ENCODE measurements at regions of chr17 and their contacts with region 1.

Region 1: DNA sequence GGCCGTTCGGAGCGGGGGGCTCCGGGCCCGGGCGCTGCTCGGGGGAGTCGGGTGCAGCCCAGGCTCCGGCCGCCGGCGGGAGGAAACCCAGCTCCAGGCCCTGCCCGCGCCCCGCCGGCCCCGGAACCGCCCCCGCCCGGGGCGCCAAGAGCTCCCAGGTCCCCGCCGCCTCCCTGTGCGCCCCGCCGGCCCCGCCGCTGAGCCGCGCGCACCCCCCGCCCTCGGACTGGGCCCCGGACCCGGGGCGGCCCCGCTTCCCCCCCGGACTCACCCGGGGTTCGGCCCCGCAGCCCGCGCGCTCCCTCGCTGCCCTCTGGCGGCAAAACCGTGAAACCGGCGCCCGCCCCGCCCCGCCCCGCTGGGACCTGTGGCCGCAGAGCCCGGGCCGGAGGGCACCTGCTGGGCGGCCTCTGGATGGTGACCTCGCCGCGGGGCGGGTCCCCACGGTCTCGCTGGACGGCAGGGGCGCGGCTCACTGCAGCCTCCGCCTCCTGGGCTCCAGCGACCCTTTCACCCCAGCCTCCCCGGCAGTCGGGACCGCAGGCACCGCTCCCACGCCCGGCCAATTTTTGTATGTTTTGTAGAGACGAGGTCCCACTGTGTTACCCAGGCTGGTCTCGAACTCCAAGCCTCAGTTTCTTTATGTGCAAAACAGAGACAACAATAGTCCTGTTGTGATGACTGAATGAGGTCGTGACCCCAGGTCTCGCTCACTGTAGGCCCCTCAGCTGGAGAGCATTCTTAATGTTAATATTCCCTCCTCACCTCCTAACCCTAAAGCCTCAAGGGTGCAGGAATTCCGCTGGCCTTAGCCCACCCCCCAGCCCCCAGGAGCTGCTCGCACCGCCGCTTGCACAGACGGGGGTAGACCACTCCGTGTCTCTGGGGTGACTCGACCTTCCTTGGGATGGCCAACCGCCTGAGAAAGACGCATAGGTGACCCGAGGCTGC is 33.6 kb upstream of the RPH3AL start:
- DNase-seq: peak; percentile 37 to 94 (median 68)

Region 2: DNA sequence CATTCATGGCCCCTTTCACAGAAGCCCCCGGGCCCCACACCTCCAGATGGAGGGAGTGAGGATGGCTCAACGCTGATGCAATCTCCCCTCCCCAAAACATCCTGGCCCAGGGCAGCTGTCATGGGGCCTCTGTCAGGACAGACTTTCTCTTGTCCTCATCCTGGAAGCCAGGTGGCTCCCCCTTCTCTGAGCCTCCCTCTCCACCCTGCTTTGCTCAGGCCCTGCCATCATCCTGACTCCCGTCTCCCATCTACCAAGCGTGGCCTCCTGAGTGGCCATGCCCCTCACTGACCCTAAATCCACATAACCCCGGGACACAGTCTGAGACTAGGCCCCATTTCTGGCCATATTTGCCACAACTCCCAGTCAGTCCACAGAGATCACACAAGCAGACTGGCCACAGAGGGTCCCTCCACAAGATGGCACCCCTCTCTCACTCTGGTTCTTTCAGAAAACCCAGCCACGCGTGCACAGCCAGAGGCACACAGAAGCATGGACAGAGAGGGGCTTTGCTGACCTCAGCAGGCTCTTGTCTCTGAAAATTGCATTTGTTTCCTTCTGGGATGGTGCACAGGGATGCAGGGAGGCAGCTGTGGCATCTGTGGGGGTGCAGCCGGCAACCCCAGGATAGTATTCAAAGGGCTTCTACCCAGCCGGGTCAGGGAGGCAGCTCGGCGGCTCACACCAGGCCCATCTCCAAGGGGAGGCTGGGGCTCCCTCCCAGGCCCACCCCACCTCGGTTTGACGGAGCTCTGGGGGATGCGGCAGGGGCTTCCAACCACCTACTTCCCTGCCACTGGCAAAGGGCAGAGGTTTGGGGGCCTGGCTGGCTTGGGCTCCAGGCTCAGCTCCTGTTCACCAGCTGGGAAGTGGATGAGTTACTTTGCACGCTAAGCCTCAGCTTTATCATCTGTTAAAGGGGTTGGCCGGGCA is 221.6 kb before region 1 on chr17:
- intact Hi-C with region 1: loop called (anchors 2 kb)
- DNase-seq: peak in 9 of 10 donors; percentile 44 to 95 (median 68)

Region 3: GRCh38 chr17:409848-410545 is 23.8 kb after region 1 on chr17:
- intact Hi-C with region 1: no loop called
- DNase-seq: peak; percentile 93 to 99 (median 95)

Region 4: DNA sequence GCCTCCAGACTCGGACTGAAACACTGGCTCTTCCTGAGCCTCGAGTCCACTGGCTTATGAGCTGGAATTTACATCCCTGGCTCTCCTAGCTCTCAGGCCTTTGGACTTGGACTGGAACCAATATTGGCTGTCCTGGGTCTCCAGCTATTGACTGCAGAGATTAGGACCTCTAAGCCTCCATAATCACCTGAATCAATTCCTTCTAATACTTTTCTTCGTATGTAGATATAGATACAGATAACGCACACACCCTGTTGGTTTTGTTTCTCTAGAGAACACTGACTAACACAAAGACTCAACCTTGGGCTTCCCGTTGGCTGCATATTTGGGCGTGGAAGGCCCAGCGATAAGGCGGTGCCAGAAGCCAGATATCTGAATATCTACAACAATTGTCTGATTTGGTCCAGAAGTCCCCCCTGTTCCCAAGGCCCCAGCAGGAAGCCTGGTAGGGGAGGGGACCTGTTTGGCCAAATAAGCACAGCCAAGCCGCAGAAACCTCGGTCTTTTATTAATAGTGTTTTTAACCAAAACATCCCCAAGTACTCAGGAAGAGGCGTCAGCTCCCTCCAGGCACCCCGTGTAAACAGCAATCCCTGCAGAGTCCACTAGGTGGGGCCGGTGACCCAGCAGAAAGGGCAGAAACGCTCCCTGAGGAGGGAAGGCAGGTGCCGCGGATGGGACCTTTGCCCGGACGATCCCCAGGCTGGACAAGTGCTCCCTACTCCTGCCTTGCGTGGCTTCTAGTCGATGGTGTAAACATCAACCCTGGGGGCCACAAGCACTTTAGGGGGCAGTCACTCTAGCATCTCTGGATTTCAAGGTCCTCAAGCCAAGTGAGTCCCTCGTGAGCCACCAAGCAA is 736.6 kb after region 1 on chr17:
- intact Hi-C with region 1: no loop called
- DNase-seq: peak; percentile 71 to 96 (median 80)

Measured in posterior cingulate gyrus (tissue), 11 donors.